ENCODE measurements at regions of chr14 and their contacts with region 1.

Region 1: GRCh38 chr14:74240794-74241651 is 1.8 kb downstream of the VSX2 start:
- DNase-seq: peak; percentile 11
- H3K4me3 Mint-ChIP-seq: peak overlapping the region; percentile 41
- H3K27ac Mint-ChIP-seq: no peak overlapping the region
- H3K4me1 Mint-ChIP-seq: peaks cover 18% of the 10 kb centered on the region
- H3K27me3 Mint-ChIP-seq: peaks cover 78% of the 10 kb centered on the region

Region 2: GRCh38 chr14:74257078-74257989 is 16.3 kb after region 1 on chr14:
- CTCF ChIA-PET with region 1: interaction called, 12 read pairs
- POLR2A ChIA-PET with region 1: no interaction called
- intact Hi-C with region 1: no loop called
- DNase-seq: peak; percentile 74
- H3K4me3 Mint-ChIP-seq: peak overlapping the region; percentile 75
- H3K27ac Mint-ChIP-seq: no peak overlapping the region
- H3K4me1 Mint-ChIP-seq: peaks cover 4% of the 10 kb centered on the region
- H3K27me3 Mint-ChIP-seq: peaks cover 8% of the 10 kb centered on the region